ENCODE measurements at regions of chr7 and their contacts with region 1.

Region 1: GRCh38 chr7:42650171-42650570 is 261.7 kb downstream of the C7orf25 start:
- DNase-seq: no peak
- H3K4me3 ChIP-seq: no peak overlapping the region
- H3K27ac ChIP-seq: no peak overlapping the region
- H3K4me1 ChIP-seq: no peaks in the 10 kb centered on the region
- H3K27me3 ChIP-seq: no peaks in the 10 kb centered on the region
- CTCF ChIP-seq: no peak
- EP300 ChIP-seq: no peak
- POLR2A ChIP-seq: no peak

Region 2: DNA sequence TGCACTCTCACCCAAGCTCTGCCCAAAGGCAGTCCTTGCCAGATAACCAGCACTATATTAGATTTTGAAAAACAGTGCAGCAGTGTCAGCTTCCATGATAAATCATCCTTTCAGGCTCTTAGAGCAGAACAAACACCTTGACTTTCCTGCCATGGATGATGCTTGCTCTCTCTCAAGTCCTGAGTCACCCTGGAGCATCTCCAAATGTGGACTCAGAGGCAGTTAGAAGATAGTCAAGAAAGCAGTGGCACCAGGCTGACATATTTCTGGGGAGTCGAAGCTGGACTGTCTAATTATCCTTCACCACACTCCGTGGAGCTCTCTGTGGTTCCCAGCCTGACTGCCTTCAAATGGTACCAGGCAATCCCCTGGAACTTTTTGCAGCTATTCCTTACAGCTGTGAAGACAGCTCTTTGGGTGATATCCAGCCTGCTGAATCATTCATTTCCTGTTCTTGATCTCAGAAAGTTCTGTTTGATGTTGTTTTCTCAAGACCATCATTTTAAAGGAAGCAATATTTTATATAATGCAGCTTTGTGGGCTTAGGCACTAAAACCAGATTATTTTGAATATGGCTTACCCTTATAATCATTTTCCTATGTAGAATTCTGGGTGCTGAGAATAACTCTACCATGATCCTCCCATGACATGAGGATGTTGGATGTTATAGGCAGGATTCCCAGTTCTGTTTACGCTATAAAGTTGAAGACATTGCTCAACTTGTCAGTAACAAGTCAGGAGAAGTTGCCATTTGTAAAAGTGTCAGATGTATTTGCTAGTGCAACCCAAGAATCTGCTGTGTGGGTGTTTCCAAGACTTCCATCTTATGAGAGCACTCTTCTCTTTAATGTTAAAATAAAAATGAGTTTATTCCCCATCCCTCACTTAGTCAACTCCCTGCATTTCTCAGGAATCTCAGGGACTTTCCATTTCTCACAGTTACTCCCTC is 27.9 kb after region 1 on chr7:
- intact Hi-C with region 1: loop called in 1 of 4 experiments (anchors 1 kb)
- DNase-seq: peak in 1 of 5 donors; percentile 29
- H3K4me3 ChIP-seq: no peak overlapping the region
- H3K27ac ChIP-seq: no peak overlapping the region
- H3K4me1 ChIP-seq: no peaks in the 10 kb centered on the region
- H3K27me3 ChIP-seq: no peaks in the 10 kb centered on the region
- CTCF ChIP-seq: no peak
- EP300 ChIP-seq: no peak
- POLR2A ChIP-seq: no peak